ENCODE measurements at regions of chr18 and their contacts with region 1.

Region 1: GRCh38 chr18:28455971-28456370 is 279.0 kb upstream of the CDH2 start:
- DNase-seq: no peak
- H3K4me3 ChIP-seq: no peak overlapping the region
- H3K27ac ChIP-seq: no peak overlapping the region
- H3K4me1 ChIP-seq: no peaks in the 10 kb centered on the region
- H3K27me3 ChIP-seq: no peaks in the 10 kb centered on the region
- CTCF ChIP-seq: no peak
- POLR2A ChIP-seq: no peak

Region 2: DNA sequence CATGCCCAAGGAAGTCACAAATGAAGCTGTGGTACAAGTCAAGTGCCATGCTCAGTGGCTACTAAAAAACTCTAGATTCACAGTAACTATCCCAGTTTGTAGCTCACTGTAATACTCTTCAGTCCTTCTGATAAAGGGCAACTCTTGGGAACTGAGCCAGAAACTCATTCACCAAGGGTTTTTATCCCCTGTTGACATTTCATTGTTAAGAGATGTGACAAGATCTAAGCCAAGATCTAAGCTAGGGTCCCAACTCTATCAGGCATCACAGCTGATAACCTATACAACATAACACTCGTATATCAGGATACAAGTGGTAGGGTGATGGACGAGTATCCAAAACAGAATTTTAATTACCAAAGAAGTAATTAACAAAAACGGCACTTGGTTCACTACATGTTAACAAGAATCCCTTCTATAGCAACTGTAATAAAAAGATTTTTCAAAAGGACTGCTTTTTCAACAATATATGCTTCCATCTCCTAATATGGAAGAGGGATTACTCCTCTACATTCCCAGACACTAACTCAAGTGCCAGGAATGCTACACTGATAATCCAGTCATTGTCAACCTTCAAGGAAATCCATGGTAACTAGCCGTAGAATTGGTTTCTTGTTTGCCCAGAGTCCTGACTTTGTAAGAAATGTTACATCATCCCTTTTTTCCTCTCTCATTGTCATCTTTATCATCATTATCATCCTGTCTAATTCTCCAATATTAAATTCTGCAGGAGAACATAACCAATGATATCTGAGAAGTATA is 390.8 kb before region 1 on chr18:
- intact Hi-C with region 1: no loop called
- DNase-seq: no peak
- H3K4me3 ChIP-seq: no peak overlapping the region
- H3K27ac ChIP-seq: no peak overlapping the region
- H3K4me1 ChIP-seq: no peaks in the 10 kb centered on the region
- H3K27me3 ChIP-seq: no peaks in the 10 kb centered on the region
- CTCF ChIP-seq: no peak
- POLR2A ChIP-seq: no peak

Region 3: GRCh38 chr18:28382215-28382879 is 73.6 kb before region 1 on chr18:
- intact Hi-C with region 1: loop called (anchors 2 kb)
- DNase-seq: no peak
- H3K4me3 ChIP-seq: no peak overlapping the region
- H3K27ac ChIP-seq: no peak overlapping the region
- H3K4me1 ChIP-seq: no peaks in the 10 kb centered on the region
- H3K27me3 ChIP-seq: no peaks in the 10 kb centered on the region
- CTCF ChIP-seq: no peak
- POLR2A ChIP-seq: no peak

Region 4: GRCh38 chr18:28581521-28582071 is 125.6 kb after region 1 on chr18:
- intact Hi-C with region 1: no loop called
- DNase-seq: no peak
- H3K4me3 ChIP-seq: no peak overlapping the region
- H3K27ac ChIP-seq: no peak overlapping the region
- H3K4me1 ChIP-seq: no peaks in the 10 kb centered on the region
- H3K27me3 ChIP-seq: no peaks in the 10 kb centered on the region
- CTCF ChIP-seq: no peak
- POLR2A ChIP-seq: no peak

Region 5: GRCh38 chr18:28816155-28816554 is 360.2 kb after region 1 on chr18:
- intact Hi-C with region 1: no loop called
- DNase-seq: no peak
- H3K4me3 ChIP-seq: no peak overlapping the region
- H3K27ac ChIP-seq: no peak overlapping the region
- H3K4me1 ChIP-seq: no peaks in the 10 kb centered on the region
- H3K27me3 ChIP-seq: no peaks in the 10 kb centered on the region
- CTCF ChIP-seq: no peak
- POLR2A ChIP-seq: no peak